Activated B cell treated with CpG ODN at 0.5 μM for 24 hours (primary cell): ENCODE measurements at regions of chr14 and their contacts with region 1.

Region 1: DNA sequence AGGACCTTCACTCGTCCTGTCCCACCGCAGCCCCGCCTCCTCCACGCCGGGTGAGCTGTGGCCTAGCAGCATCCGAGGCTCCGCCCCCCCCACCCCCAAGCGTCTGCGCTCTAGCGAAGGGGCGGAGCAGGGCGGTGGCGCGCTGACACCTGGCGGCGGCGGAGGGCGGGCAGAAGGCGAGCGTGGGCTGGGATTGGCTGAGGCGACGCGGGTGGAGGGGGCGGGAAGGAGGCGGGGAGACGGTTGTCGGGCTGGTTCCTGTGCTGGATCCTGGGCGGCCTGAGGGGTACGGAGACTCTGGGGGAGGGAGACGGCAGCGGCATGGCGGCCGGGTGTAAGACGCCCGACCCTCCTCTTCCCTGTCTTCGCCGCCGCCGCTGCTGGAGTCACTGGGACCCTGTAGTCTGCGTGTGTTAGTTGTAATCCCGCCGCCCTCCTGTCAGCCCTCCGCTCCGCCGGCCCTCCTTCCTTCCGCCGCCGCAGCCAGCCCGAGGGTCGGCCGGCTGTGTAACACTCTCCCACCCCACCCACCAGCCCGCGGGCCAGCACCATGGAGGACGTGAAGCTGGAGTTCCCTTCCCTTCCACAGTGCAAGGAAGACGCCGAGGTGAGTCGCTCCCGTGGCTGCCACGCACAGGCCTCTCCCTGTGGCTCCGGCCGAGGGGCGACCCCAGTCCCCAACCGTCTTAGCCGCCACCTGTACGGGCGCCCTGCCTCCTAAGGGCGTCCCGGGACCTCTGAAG is at the start of gene STYX:
- DNase-seq: peak; percentile 95
- ATAC-seq: peak; percentile 96
- H3K4me3 Mint-ChIP-seq: peak within 1 kb of the TSS; percentile 94
- H3K27ac Mint-ChIP-seq: peak within 1 kb of the TSS; percentile 89
- H3K4me1 Mint-ChIP-seq: peaks cover 46% of the 10 kb centered on the region
- H3K27me3 Mint-ChIP-seq: no peaks in the 10 kb centered on the region
- CTCF ChIP-seq: no peak
- total RNA-seq, gene STYX: 13.1 and 13.5 TPM in 2 replicates

Region 2: DNA sequence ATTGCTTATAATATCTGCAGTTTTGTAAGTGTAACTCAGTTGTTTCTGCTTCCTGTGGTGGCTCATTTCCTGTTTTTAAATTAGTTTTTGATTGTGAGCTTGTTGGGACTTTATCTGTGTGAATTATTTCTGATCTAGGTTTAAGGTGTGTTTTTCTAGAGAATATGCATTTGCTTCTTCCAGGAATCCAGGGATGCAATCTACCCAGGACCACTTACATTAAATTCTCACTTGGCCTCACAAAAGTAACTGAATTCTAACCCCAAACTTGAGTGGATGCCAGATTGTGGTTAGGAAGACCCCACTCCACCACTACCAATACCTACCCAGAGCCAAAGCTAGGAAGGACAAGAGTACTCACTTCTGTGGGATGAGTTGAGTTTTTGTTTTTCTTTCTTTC is 11.8 kb after region 1 on chr14:
- CTCF ChIA-PET with region 1: no interaction called
- POLR2A ChIA-PET with region 1: interaction called, 37 read pairs
- intact Hi-C with region 1: loop called (anchors 1 kb)
- DNase-seq: no peak
- ATAC-seq: peak; percentile 10
- H3K4me3 Mint-ChIP-seq: peak overlapping the region; percentile 73
- H3K27ac Mint-ChIP-seq: peak overlapping the region; percentile 87
- H3K4me1 Mint-ChIP-seq: peaks cover 42% of the 10 kb centered on the region
- H3K27me3 Mint-ChIP-seq: no peaks in the 10 kb centered on the region
- CTCF ChIP-seq: no peak

Region 3: DNA sequence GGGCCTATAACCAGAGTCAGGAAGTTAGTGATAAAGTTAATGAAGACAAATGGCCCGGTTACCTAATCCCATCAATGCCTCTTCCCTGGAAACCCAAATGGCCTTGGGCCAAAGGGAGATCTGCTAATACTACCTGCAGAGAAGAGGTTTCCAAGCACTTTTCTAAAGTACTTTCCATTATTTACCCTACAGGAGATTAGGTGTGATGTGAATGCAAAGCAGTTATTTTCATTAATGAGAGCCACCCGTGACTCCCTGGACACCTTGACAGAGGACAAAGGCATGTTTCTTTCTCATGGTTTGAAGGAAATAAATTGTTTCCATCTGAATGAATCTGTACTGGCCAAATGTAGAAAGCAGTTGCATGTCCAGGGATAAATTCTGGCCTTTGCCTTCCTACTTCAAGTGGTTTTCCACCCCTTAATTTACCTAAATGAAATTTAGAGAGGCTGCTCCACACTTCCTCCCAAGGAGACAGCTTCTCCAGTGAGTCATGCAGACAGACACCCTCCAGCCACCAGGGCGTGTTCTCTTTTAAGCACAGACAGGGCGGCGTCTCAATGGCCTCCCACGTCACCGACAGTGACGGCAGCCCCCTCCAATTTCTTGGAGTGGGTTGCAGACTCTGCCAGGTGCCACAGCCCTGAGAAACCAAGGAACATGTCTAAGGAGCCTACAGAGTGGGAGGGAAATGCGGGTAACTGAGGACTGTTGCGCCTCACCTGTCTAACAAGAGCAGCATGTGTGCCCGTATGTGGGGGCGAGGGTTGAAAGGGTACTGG is 105.2 kb after region 1 on chr14:
- CTCF ChIA-PET with region 1: no interaction called
- POLR2A ChIA-PET with region 1: no interaction called
- intact Hi-C with region 1: no loop called
- DNase-seq: no peak
- ATAC-seq: no peak
- H3K4me3 Mint-ChIP-seq: no peak overlapping the region
- H3K27ac Mint-ChIP-seq: no peak overlapping the region
- H3K4me1 Mint-ChIP-seq: no peaks in the 10 kb centered on the region
- H3K27me3 Mint-ChIP-seq: peaks cover 4% of the 10 kb centered on the region
- CTCF ChIP-seq: no peak